Esophagus muscularis mucosa (tissue), 4 donors: ENCODE measurements at regions of chr18 and their contacts with region 1.

Region 1: GRCh38 chr18:10525371-10526210 is at the start of gene NAPG:
- DNase-seq: peak; percentile 93
- H3K4me3 ChIP-seq: peak within 1 kb of the TSS; percentile 82 to 99 (median 92)
- H3K27ac ChIP-seq: peak within 1 kb of the TSS; percentile 89 to 97 (median 94)
- H3K4me1 ChIP-seq: peaks cover 29 to 49% (median 42%) of the 10 kb centered on the region in 4 donors
- H3K27me3 ChIP-seq: no peaks in the 10 kb centered on the region
- CTCF ChIP-seq: peak in 1 of 3 experiments; percentile 30
- EP300 ChIP-seq: no peak
- POLR2A ChIP-seq: no peak
- total RNA-seq, gene NAPG: 32.1 to 39.5 (median 34.7) TPM

Region 2: DNA sequence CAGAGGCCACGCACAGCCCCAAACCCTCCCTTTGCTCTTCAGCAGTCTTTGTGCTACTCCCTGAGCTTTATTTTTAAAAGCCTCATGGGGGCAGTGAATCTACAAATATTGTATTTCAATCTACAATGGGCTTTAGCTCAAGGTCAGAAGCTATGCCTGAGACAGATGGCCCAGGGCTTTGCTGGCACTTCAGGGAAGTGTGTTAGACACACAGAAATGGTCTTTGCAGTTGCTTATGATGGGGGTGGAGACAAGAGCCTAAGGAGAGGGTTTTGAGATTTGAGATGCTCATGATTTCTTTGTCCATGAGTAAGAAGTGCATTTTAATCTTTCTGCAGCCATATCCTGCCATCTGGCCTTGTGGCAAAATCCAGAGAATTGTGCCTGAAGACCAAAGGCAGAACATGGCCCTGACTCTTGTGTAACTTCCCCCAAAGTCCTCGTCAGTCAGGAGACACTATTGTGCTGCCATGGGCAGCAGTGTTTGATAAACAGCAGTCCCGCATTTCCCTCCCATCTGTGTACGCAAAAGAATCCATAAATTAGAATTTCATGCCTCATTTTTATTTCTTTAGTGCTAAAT is 519.2 kb before region 1 on chr18:
- intact Hi-C with region 1: loop called (anchors 10 kb)
- DNase-seq: no peak
- H3K4me3 ChIP-seq: no peak overlapping the region
- H3K27ac ChIP-seq: no peak overlapping the region
- H3K4me1 ChIP-seq: peaks cover 23 to 36% (median 31%) of the 10 kb centered on the region in 4 donors
- H3K27me3 ChIP-seq: no peaks in the 10 kb centered on the region
- CTCF ChIP-seq: peak; percentile 34 to 38 (median 38)
- EP300 ChIP-seq: no peak
- POLR2A ChIP-seq: no peak